ENCODE measurements at regions of chr1 and their contacts with region 1.

Region 1: DNA sequence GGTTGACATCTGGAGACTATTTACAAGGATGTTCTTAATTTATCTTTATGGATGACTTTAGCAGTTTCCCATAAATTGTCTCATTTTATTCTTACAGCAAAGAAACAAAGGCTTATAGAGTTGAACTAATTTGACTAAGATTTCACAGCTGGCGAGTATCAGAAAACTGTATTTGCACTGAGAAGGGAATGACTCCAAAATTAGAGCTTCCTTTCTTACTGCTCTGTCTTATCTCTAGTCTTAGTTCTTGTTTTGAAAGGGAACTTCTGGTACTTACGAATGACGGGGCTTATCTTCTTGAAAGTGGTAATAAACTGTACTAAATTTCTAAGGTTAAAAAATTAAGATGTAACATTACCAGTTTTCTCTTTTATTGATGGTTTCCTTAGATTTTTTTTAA is 13.6 kb downstream of the CNST start:
- DNase-seq: no peak
- ATAC-seq: no peak
- H3K4me3 Mint-ChIP-seq: peak overlapping the region in 4 of 10 donors; percentile 16 to 70 (median 22)
- H3K27ac Mint-ChIP-seq: peak overlapping the region in 7 of 10 donors; percentile 6 to 96 (median 79)
- H3K4me1 Mint-ChIP-seq: peaks cover 46 to 92% (median 85%) of the 10 kb centered on the region in 4 donors
- H3K27me3 Mint-ChIP-seq: no peaks in the 10 kb centered on the region

Region 2: GRCh38 chr1:246566128-246566812 is 13.5 kb before region 1 on chr1 and contains the starts of genes CNST and TFB2M:
- POLR2A ChIA-PET with region 1: interaction called, 26 read pairs
- DNase-seq: peak; percentile 73 to 95 (median 88)
- ATAC-seq: peak; percentile 75 to 79
- H3K4me3 Mint-ChIP-seq: peak within 1 kb of the TSS; percentile 97 to 99 (median 98)
- H3K27ac Mint-ChIP-seq: peak within 1 kb of the TSS; percentile 93 to 99 (median 98)
- H3K4me1 Mint-ChIP-seq: peaks cover 13 to 64% (median 53%) of the 10 kb centered on the region in 4 donors
- H3K27me3 Mint-ChIP-seq: no peaks in the 10 kb centered on the region
- polyA plus RNA-seq, gene CNST: 32.0 to 48.3 (median 37.6) TPM
- polyA plus RNA-seq, gene TFB2M: 17.8 to 20.8 (median 19.3) TPM

Region 3: GRCh38 chr1:246971090-246971721 is 391.4 kb after region 1 on chr1:
- POLR2A ChIA-PET with region 1: no interaction called
- DNase-seq: peak in 8 of 10 donors; percentile 1 to 41 (median 22)
- ATAC-seq: no peak
- H3K4me3 Mint-ChIP-seq: peak overlapping the region in 1 of 10 donors; percentile 30
- H3K27ac Mint-ChIP-seq: no peak overlapping the region
- H3K4me1 Mint-ChIP-seq: no peaks in the 10 kb centered on the region
- H3K27me3 Mint-ChIP-seq: peaks cover 0 to 4% (median 0%) of the 10 kb centered on the region in 5 donors